Aorta (tissue), 5 donors: ENCODE measurements at regions of chr7 and their contacts with region 1.

Region 1: DNA sequence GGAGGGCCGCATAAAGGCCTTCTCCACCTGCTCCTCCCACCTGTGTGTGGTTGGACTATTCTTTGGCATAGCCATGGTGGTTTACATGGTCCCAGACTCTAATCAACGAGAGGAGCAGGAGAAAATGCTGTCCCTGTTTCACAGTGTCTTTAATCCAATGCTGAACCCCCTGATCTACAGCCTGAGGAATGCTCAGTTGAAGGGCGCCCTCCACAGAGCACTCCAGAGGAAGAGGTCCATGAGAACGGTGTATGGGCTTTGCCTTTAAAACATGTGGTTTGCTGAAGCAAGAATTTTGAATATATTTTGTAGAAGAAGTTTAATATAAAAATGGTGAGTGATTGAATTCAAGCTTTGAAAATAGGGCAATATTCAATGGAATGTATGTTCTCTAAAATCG is 889 bp downstream of the OR2A2 start:
- DNase-seq: no peak
- ATAC-seq: no peak
- H3K4me3 ChIP-seq: no peak overlapping the region
- H3K27ac ChIP-seq: no peak overlapping the region
- H3K4me1 ChIP-seq: no peaks in the 10 kb centered on the region
- H3K27me3 ChIP-seq: no peaks in the 10 kb centered on the region

Region 2: GRCh38 chr7:144164784-144165183 is 54.5 kb after region 1 on chr7:
- intact Hi-C with region 1: loop called in 1 of 2 experiments (anchors 5 kb)
- DNase-seq: no peak
- ATAC-seq: no peak
- H3K4me3 ChIP-seq: no peak overlapping the region
- H3K27ac ChIP-seq: no peak overlapping the region
- H3K4me1 ChIP-seq: no peaks in the 10 kb centered on the region
- H3K27me3 ChIP-seq: no peaks in the 10 kb centered on the region

Region 3: DNA sequence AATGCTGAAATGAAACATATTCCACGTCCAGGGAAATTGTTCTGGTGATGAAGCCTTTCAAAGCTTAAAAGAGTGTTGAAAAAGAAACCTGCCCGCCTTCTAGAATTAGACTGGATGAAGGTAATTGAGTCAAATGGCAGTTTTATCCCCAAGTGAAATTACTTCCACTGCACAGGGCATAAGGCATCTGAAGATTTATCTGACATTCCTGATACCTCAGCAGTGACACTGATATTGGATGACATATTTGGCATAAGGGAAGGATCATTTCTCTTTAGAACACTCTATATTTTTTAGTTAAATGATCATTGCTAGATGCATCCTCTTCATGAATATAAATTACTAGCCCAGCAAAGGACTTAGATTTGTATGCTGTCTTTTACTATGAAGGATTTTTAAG is 955.2 kb after region 1 on chr7:
- intact Hi-C with region 1: no loop called
- DNase-seq: no peak
- ATAC-seq: no peak
- H3K4me3 ChIP-seq: no peak overlapping the region
- H3K27ac ChIP-seq: no peak overlapping the region
- H3K4me1 ChIP-seq: no peaks in the 10 kb centered on the region
- H3K27me3 ChIP-seq: no peaks in the 10 kb centered on the region